CD4-positive, alpha-beta memory T cell (primary cell): ENCODE measurements at regions of chr3 and their contacts with region 1.

Region 1: GRCh38 chr3:185983495-185984141 is 45.8 kb upstream of the TRA2B start:
- DNase-seq: peak in 4 of 5 donors; percentile 47 to 62 (median 51)
- H3K4me3 ChIP-seq: no peak overlapping the region
- H3K4me3 Mint-ChIP-seq: peak overlapping the region in 1 of 8 donors; percentile 11
- H3K27ac ChIP-seq: no peak overlapping the region
- H3K27ac Mint-ChIP-seq: no peak overlapping the region
- H3K4me1 ChIP-seq: peaks cover 3% of the 10 kb centered on the region
- H3K4me1 Mint-ChIP-seq: peaks cover 0 to 8% (median 2%) of the 10 kb centered on the region in 4 donors
- H3K27me3 ChIP-seq: no peaks in the 10 kb centered on the region
- H3K27me3 Mint-ChIP-seq: peaks cover 4% of the 10 kb centered on the region in 2 donors

Region 2: DNA sequence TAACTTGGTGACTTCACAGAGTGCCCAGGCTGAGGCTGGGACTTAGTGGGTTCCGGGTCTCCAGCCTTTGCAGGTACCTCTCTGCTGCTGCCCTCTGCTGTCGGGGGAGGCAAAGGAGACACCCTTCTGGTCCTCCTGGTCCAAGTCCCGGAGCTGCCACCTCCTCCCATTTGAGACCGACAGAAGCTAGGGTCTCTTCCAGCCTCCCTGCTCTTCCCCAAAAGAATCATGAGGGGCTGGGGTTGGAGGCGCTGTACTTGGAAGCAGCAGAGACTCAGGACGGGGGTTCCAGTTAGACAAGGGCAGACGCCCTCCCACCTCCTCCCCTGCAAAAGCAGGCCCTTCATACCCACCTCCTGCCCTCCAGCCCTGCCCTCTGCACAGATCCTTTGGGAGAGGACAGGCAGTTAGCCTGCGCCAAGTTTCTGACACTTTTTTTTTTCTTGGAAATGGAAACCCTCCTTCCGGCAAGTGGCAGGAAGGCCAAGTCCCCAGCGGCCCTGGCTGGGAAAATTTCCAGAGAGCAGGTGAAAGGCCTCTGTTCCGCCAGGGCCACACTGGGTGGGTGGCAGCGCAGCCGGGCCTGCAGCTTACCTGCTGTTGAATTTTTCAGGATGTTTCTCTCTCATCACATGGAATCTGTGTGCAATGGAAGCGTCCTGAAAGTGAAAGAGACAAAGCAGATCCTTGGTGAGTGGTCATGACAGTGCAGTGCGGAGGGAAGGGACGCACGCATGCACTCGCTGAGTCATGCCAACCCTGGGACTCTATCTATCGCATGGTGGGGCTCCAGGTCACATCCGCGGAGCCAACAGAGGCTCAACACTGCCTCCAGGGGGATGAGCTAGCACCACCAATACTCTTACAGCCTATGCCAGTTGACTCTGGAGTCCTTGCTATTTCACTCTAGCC is 258.5 kb after region 1 on chr3:
- CTCF ChIA-PET with region 1: interaction called, 5 read pairs
- POLR2A ChIA-PET with region 1: no interaction called
- intact Hi-C with region 1: loop called (anchors 2 kb)
- DNase-seq: peak in 1 of 5 donors; percentile 9
- H3K4me3 ChIP-seq: no peak overlapping the region
- H3K4me3 Mint-ChIP-seq: peak overlapping the region in 2 of 8 donors; percentile 23 to 24
- H3K27ac ChIP-seq: no peak overlapping the region
- H3K27ac Mint-ChIP-seq: no peak overlapping the region
- H3K4me1 ChIP-seq: no peaks in the 10 kb centered on the region
- H3K4me1 Mint-ChIP-seq: peaks cover 0 to 4% (median 2%) of the 10 kb centered on the region in 4 donors
- H3K27me3 ChIP-seq: no peaks in the 10 kb centered on the region
- H3K27me3 Mint-ChIP-seq: peaks cover 5 to 12% of the 10 kb centered on the region in 2 donors

Region 3: DNA sequence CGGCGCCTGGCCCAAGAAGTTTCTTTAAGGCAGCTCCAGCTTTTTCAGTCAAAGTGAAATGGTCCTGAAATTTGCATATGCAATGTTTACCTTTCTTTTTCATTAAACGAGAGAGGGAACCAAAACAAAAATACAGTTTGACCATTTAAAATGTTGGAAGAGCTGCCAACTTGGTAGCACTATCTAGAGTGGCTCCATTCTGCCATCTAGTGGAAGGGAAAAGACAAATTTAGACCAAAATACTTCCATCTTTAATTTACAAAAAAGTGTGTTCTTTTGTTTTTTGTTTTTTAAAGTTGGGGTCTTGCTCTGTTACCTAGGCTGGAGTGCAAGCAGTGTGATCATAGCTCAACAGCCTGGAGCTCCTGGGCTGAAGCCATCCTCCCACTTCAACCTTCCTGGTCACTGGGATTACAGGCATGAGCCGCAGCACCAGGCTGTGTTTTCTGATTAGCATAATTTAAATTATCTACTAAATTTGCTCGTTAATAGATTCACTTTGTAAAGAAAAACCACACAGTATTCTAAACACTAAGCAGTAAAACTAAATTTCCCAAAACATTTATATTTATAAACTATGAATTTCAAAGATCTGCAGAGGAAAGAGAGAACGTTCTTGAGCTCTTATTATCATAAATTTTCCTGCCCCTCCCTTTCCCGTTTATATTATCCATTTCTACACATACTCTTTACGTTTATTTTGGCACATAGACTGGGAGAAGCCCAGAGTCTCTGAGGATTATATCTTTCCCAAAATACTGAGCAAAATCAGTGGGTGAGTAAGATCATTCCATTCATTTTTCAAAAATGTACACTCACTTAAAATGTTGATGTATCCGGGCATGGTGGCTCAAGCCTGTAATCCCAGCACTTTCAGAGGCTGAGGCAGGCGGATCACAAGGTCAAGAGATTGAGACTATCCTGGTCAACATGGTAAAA is 838.1 kb after region 1 on chr3:
- CTCF ChIA-PET with region 1: interaction called, 11 read pairs
- POLR2A ChIA-PET with region 1: no interaction called
- intact Hi-C with region 1: no loop called
- DNase-seq: peak in 4 of 5 donors; percentile 42 to 56 (median 46)
- H3K4me3 ChIP-seq: no peak overlapping the region
- H3K4me3 Mint-ChIP-seq: no peak overlapping the region
- H3K27ac ChIP-seq: no peak overlapping the region
- H3K27ac Mint-ChIP-seq: peak overlapping the region in 1 of 7 donors; percentile 4
- H3K4me1 ChIP-seq: peaks cover 13% of the 10 kb centered on the region
- H3K4me1 Mint-ChIP-seq: peaks cover 5 to 15% (median 11%) of the 10 kb centered on the region in 4 donors
- H3K27me3 ChIP-seq: no peaks in the 10 kb centered on the region
- H3K27me3 Mint-ChIP-seq: peaks cover 3 to 8% of the 10 kb centered on the region in 2 donors